ENCODE measurements at regions of chr1 and their contacts with region 1.

Region 1: GRCh38 chr1:230308039-230308438 is 118.1 kb downstream of the PGBD5 start:
- DNase-seq: peak; percentile 64 to 92 (median 80)
- H3K4me3 ChIP-seq: no peak overlapping the region
- H3K27ac ChIP-seq: no peak overlapping the region
- H3K4me1 ChIP-seq: peaks cover 0 to 4% of the 10 kb centered on the region in 2 donors
- H3K27me3 ChIP-seq: no peaks in the 10 kb centered on the region
- CTCF ChIP-seq: no peak
- POLR2A ChIP-seq: no peak

Region 2: GRCh38 chr1:229661022-229661877 is 646.8 kb before region 1 on chr1:
- intact Hi-C with region 1: loop called (anchors 2 to 5 kb)
- DNase-seq: peak; percentile 82 to 91 (median 88)
- H3K4me3 ChIP-seq: no peak overlapping the region
- H3K27ac ChIP-seq: no peak overlapping the region
- H3K4me1 ChIP-seq: no peaks in the 10 kb centered on the region
- H3K27me3 ChIP-seq: no peaks in the 10 kb centered on the region
- CTCF ChIP-seq: peak; percentile 81 to 97 (median 94)
- POLR2A ChIP-seq: no peak